Activated CD8-positive, alpha-beta T cell treated with anti-CD3 and anti-CD28 coated beads for 36 hours (primary cell): ENCODE measurements at regions of chr5 and their contacts with region 1.

Region 1: DNA sequence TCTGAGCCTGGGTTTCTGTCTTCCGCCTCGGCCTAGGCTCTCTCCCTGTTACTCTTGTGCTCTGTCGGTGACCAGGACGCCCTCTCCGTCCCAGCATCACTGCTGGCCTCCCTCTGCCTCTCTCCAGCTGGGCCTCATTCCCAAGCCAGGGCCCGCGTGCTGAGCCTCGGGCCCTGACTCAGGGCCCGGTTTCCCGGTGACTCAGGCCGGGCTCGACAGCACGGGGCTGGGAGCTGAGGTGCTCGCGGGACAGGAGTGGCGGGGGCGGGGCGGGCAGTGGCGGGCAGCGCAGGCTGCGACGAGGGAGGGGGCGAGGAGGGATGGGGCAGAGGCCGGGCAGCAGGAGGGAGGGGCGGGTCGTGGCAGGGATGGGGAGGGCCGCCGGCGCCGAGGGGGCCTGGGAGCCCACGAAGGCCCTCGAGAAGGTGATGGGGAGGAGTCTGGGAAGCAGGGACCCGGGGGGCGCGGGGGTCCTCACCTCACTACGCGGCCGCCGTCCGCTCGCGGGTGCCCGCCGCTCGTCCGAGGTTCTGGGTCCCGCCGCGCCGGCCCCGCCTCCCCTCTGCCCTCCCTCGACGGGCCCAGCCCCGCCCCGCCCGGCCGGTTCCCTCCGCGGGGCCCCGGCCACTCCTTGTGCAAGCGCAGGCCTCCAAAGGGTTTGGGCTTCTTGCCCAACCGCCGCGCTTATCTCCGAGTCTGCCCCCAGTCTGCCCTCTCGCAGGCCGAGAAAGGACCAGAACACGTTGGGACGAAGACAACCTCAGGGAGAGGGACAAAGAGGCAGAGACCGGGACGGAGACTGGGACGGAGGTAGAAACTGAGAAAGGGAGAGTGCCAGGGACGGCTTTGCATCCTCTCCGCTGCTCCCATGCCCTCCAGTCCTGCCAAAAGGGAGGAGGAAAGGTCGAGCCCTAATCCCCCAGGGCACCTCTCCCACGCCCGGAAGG is at the start of gene ARAP3:
- DNase-seq: peak; percentile 54
- ATAC-seq: peak; percentile 73
- H3K4me3 Mint-ChIP-seq: peak within 1 kb of the TSS; percentile 72
- H3K27ac Mint-ChIP-seq: peak within 1 kb of the TSS; percentile 68
- H3K4me1 Mint-ChIP-seq: peaks cover 24% of the 10 kb centered on the region
- H3K27me3 Mint-ChIP-seq: no peaks in the 10 kb centered on the region
- CTCF ChIP-seq: no peak
- total RNA-seq, gene ARAP3: 5.9 to 7.2 TPM

Region 2: GRCh38 chr5:141359790-141360426 is 322.1 kb before region 1 on chr5 and contains the start of gene PCDHGB2:
- CTCF ChIA-PET with region 1: no interaction called
- POLR2A ChIA-PET with region 1: no interaction called
- intact Hi-C with region 1: no loop called
- DNase-seq: peak; percentile 16
- ATAC-seq: no peak
- H3K4me3 Mint-ChIP-seq: peak within 1 kb of the TSS; percentile 70
- H3K27ac Mint-ChIP-seq: no peak within 1 kb of the TSS
- H3K4me1 Mint-ChIP-seq: no peaks in the 10 kb centered on the region
- H3K27me3 Mint-ChIP-seq: peaks cover 69% of the 10 kb centered on the region
- CTCF ChIP-seq: peak; percentile 56
- total RNA-seq, gene PCDHGB2: 0.11 to 0.14 TPM

Region 3: GRCh38 chr5:141598391-141599350 is 83.3 kb before region 1 on chr5:
- CTCF ChIA-PET with region 1: no interaction called
- POLR2A ChIA-PET with region 1: no interaction called
- intact Hi-C with region 1: no loop called
- DNase-seq: no peak
- ATAC-seq: peak; percentile 88
- H3K4me3 Mint-ChIP-seq: no peak overlapping the region
- H3K27ac Mint-ChIP-seq: peak overlapping the region; percentile 71
- H3K4me1 Mint-ChIP-seq: peaks cover 72% of the 10 kb centered on the region
- H3K27me3 Mint-ChIP-seq: no peaks in the 10 kb centered on the region
- CTCF ChIP-seq: no peak

Region 4: DNA sequence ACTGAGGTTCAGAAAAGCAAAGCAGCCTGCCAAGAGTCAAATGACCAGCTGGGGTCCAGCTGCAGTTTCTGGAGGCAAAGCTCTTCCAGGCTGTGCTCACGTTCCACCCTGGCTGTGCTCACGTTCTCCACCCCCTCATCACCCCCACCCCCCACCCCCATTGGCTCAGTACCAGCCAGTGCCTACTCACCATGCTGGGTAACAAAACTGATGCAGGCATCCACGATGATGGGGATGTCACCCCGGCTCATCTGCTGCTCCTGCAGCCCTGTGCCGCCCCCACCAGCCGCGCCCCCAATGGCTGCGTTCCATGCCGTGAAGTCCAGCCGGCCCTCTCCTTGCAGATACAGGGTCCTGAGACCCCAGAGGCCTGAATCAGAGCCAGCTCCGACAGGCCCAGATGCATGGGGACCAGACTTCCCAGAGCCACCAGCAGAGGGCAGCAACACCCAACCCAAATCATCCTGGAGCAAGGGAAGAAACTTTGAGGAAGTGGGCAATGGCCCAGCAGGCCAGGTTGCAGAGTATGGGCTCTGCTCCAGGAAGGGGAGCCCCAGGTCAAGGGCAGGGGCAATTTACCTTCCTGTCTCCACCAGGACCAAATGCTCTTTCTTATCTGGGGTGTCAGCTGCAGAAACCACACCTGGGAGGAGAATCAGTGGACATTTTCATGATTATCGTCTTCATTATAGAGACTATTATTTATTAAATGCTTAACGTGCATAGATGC is 17.1 kb before region 1 on chr5:
- CTCF ChIA-PET with region 1: interaction called, 15 read pairs
- POLR2A ChIA-PET with region 1: interaction called, 3 read pairs
- intact Hi-C with region 1: no loop called
- DNase-seq: peak; percentile 85
- ATAC-seq: peak; percentile 95
- H3K4me3 Mint-ChIP-seq: no peak overlapping the region
- H3K27ac Mint-ChIP-seq: no peak overlapping the region
- H3K4me1 Mint-ChIP-seq: peaks cover 3% of the 10 kb centered on the region
- H3K27me3 Mint-ChIP-seq: no peaks in the 10 kb centered on the region
- CTCF ChIP-seq: peak; percentile 89

Region 5: DNA sequence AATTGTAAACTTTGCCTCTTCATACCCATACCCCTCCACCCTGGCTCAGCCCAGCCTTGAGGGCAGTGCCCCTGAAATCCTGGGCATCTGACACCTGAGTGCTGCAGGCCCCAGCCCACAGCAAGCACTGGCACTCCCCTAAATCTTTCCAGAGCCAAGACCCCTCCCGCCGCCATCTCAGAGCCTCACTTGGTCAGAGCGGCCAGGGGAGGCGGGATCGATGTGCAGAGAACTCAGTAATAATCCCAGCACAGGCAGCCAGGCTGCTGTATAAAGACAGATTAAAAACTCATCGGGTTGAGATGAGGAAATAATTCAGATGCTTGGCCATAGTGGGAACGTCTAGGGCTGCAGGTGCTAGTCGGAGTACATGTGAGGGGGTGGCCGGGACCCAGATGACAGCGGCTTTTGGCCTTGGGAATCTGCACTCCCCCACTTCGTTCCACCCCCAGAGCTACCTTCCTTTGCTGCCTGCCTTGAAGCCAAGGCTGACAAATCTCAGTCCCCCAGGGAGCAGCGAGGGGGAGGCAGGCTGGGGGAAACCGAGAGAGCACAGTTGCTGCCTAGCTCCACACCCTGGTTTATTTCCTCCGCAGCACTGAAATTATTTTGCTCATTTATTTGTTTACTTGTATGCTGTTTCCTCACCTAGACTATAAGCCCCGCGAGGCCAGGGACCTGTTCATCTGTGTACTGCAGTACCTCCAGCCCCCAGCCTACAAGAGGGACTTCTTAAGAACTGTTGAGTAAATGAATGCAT is 19.6 kb after region 1 on chr5:
- CTCF ChIA-PET with region 1: interaction called, 15 read pairs
- POLR2A ChIA-PET with region 1: no interaction called
- intact Hi-C with region 1: no loop called
- DNase-seq: peak; percentile 47
- ATAC-seq: peak; percentile 46
- H3K4me3 Mint-ChIP-seq: peak overlapping the region; percentile 56
- H3K27ac Mint-ChIP-seq: no peak overlapping the region
- H3K4me1 Mint-ChIP-seq: peaks cover 11% of the 10 kb centered on the region
- H3K27me3 Mint-ChIP-seq: peaks cover 32% of the 10 kb centered on the region
- CTCF ChIP-seq: no peak

Region 6: DNA sequence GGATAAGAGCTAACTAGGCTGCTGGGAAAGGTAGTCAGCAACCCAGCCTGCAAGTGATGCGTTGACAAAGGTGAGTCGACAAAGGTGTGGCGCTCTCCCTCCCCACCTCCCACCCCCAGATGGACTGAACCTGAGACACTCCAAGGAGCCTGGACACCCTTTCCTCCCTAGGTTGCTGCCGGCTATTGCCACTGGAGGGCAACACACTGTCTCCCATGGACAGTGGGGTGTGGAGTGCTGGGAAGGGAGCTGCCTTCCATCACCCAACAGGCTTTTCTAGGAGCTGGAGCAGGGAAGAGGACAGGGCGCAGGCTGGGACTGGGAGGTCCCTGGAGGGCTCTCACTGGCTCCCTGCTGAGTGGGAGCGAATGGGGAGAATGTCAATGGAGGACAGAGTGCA is 75.4 kb after region 1 on chr5:
- CTCF ChIA-PET with region 1: no interaction called
- POLR2A ChIA-PET with region 1: no interaction called
- intact Hi-C with region 1: no loop called
- DNase-seq: no peak
- ATAC-seq: no peak
- H3K4me3 Mint-ChIP-seq: no peak overlapping the region
- H3K27ac Mint-ChIP-seq: no peak overlapping the region
- H3K4me1 Mint-ChIP-seq: no peaks in the 10 kb centered on the region
- H3K27me3 Mint-ChIP-seq: peaks cover 44% of the 10 kb centered on the region
- CTCF ChIP-seq: no peak

Region 7: GRCh38 chr5:141858084-141858765 is 176.3 kb after region 1 on chr5:
- CTCF ChIA-PET with region 1: no interaction called
- POLR2A ChIA-PET with region 1: no interaction called
- intact Hi-C with region 1: no loop called
- DNase-seq: no peak
- ATAC-seq: no peak
- H3K4me3 Mint-ChIP-seq: no peak overlapping the region
- H3K27ac Mint-ChIP-seq: no peak overlapping the region
- H3K4me1 Mint-ChIP-seq: no peaks in the 10 kb centered on the region
- H3K27me3 Mint-ChIP-seq: peaks cover 6% of the 10 kb centered on the region
- CTCF ChIP-seq: no peak